Activated CD8-positive, alpha-beta T cell treated with anti-CD3 and anti-CD28 coated beads for 36 hours (primary cell): ENCODE measurements at regions of chr10 and their contacts with region 1.

Region 1: GRCh38 chr10:77173615-77174461 is 463.8 kb downstream of the KCNMA1 start:
- DNase-seq: peak; percentile 84
- ATAC-seq: peak; percentile 66
- H3K4me3 Mint-ChIP-seq: no peak overlapping the region
- H3K27ac Mint-ChIP-seq: no peak overlapping the region
- H3K4me1 Mint-ChIP-seq: no peaks in the 10 kb centered on the region
- H3K27me3 Mint-ChIP-seq: peaks cover 1% of the 10 kb centered on the region
- CTCF ChIP-seq: peak; percentile 87

Region 2: GRCh38 chr10:77405771-77406241 is 232.0 kb after region 1 on chr10:
- CTCF ChIA-PET with region 1: no interaction called
- POLR2A ChIA-PET with region 1: no interaction called
- intact Hi-C with region 1: loop called (anchors 10 kb)
- DNase-seq: peak; percentile 66
- ATAC-seq: peak; percentile 70
- H3K4me3 Mint-ChIP-seq: no peak overlapping the region
- H3K27ac Mint-ChIP-seq: no peak overlapping the region
- H3K4me1 Mint-ChIP-seq: no peaks in the 10 kb centered on the region
- H3K27me3 Mint-ChIP-seq: peaks cover 2% of the 10 kb centered on the region
- CTCF ChIP-seq: no peak